IMR-90 (cell line): ENCODE measurements at regions of chr4 and their contacts with region 1.

Region 1: GRCh38 chr4:56544573-56545131 is 39.1 kb downstream of the ARL9 start:
- DNase-seq: peak; percentile 84
- ATAC-seq: peak; percentile 99
- H3K4me3 ChIP-seq: peak overlapping the region; percentile 49
- H3K27ac ChIP-seq: no peak overlapping the region
- H3K4me1 ChIP-seq: no peaks in the 10 kb centered on the region
- H3K27me3 ChIP-seq: no peaks in the 10 kb centered on the region
- CTCF ChIP-seq: peak; percentile 98
- POLR2A ChIP-seq: no peak
- RAD21 ChIP-seq: peak; percentile 74

Region 2: GRCh38 chr4:56424697-56425514 is 119.7 kb before region 1 on chr4:
- CTCF ChIA-PET with region 1: no interaction called
- POLR2A ChIA-PET with region 1: no interaction called
- dilution Hi-C with region 1: no loop called
- in situ Hi-C with region 1: no loop called
- intact Hi-C with region 1: loop called (anchors 1 kb)
- DNase-seq: peak; percentile 45
- ATAC-seq: peak; percentile 67
- H3K4me3 ChIP-seq: no peak overlapping the region
- H3K27ac ChIP-seq: no peak overlapping the region
- H3K4me1 ChIP-seq: no peaks in the 10 kb centered on the region
- H3K27me3 ChIP-seq: no peaks in the 10 kb centered on the region
- CTCF ChIP-seq: peak; percentile 65
- POLR2A ChIP-seq: no peak
- RAD21 ChIP-seq: peak; percentile 53